ENCODE measurements at regions of chr4 and their contacts with region 1.

Region 1: DNA sequence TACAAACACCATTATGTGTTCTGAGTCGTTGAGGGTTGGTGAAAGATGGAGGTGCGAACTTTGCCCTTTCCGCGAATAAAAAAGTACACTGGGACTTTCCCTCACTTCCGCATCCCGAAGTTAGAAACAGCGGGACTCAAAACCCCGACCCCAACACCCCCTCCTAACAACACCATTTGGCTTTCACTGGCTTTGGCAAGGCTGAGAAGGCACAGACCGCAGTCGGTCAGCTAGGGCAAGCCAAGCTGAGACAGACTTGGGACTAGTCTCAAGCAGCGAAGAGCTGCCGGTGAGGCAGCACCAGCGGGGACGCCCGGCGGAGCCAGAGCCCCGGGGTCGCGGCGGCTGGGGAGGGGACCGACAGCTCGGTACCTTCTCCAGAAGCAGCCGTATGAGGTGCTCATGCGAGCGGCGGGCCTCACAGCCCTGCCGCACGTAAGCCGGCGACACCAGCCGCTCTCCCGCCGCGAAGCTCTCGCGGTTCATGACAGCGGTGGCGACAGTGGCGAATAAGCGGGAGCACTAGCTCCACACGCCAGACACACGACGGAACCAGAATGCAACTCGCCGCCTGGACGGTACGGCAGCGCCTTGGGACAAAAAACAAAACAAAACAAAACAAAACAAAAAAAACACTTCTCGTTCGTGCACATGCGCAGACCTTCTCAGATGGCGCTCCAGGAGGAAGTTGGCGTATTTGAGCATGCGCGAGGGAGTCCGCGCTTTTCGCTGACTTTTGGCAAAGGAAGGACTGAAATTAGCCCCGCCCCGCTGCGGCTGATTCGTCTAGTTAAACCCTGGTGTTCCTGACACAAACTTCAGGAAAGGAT is at the start of gene SEPSECS:
- DNase-seq: peak; percentile 95 to 96 (median 96)
- H3K4me3 ChIP-seq: peak within 1 kb of the TSS; percentile 62 to 68
- H3K4me3 Mint-ChIP-seq: peak within 1 kb of the TSS; percentile 90 to 97 (median 94)
- H3K27ac ChIP-seq: peak within 1 kb of the TSS; percentile 97
- H3K27ac Mint-ChIP-seq: peak within 1 kb of the TSS; percentile 94 to 99 (median 97)
- H3K4me1 ChIP-seq: peaks cover 38% of the 10 kb centered on the region
- H3K4me1 Mint-ChIP-seq: peaks cover 33 to 68% (median 43%) of the 10 kb centered on the region in 4 donors
- H3K27me3 ChIP-seq: no peaks in the 10 kb centered on the region
- H3K27me3 Mint-ChIP-seq: no peaks in the 10 kb centered on the region
- total RNA-seq, gene SEPSECS: 14.7 to 15.1 TPM

Region 2: DNA sequence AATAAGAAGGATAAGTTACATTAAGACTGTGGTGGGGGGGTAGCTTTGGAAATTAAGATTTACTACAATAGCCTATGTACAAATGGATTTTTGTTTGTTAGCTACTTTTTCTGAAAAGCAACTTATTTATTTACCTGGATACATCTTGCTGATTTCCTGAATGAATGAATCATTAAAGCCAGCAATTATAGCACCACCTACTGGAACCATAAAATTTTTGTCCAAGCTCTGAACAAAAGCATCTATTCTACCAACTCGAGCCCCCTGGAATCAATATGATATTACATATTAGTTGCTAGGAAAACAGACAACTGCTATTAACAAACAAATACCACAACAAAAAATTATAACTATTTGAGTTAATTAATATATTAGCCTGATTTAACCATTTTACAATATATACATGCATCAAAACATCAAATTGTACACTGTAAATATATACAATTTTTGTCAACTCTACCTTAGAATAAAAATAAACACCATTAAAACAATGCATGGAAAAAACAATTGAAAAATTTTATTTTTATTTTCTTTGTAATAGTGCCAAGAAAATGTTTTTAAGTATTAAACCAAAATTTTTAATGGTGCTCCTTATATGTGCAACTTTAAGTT is 15.1 kb before region 1 on chr4:
- CTCF ChIA-PET with region 1: interaction called, 13 read pairs
- POLR2A ChIA-PET with region 1: interaction called, 5 read pairs
- intact Hi-C with region 1: no loop called
- DNase-seq: peak in 1 of 5 donors; percentile 7
- H3K4me3 ChIP-seq: no peak overlapping the region
- H3K4me3 Mint-ChIP-seq: no peak overlapping the region
- H3K27ac ChIP-seq: no peak overlapping the region
- H3K27ac Mint-ChIP-seq: no peak overlapping the region
- H3K4me1 ChIP-seq: no peaks in the 10 kb centered on the region
- H3K4me1 Mint-ChIP-seq: peaks cover 0 to 1% (median 0%) of the 10 kb centered on the region in 4 donors
- H3K27me3 ChIP-seq: no peaks in the 10 kb centered on the region
- H3K27me3 Mint-ChIP-seq: no peaks in the 10 kb centered on the region

Region 3: DNA sequence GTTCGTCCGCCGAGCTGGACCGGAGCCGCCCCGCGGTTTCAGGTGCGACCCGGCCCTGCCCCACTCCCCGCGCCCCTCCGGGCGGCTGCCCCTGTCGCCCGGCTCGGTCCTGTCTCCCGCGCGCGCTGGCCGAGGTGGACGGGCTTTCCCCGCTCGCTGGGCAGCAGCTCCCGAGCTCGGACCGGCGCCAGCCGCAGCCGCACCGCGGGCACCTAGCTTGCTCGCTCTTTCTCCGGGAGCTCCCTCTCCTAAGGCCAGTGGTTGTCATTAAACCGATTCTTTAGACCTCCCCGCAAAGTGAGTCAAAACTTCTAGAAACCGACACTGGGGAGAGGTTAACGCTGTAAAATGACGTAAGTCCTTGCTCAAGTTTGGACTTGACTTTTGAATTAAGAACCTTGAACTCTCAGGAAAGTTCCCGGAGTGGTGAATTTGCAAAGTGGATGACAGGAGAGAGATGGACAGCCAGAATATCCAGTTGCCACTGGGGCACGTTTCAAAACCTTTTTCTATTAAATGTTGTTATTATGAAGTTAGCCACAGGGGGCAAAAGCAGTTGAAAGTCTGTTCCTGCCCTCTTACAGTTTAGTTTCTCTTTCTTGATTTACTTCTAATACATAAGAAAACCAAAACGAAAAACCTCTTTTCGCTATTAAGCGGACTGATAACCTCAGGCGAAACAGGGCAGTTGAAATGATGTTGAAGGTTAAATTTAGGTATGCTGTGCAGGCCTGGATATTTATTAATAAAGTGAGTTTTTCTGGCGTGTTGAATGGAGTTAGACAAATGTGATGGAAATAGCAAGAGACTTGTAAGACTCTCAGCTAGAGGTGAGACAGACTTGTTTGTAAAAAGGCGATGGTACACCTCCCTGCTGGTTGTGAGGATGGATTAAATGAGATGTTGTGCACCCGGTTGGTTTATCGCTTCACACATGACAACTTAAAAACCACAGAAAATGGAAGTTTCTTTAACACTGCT is 74.6 kb after region 1 on chr4:
- CTCF ChIA-PET with region 1: interaction called, 36 read pairs
- POLR2A ChIA-PET with region 1: interaction called, 70 read pairs
- intact Hi-C with region 1: loop called (anchors 1 kb)
- DNase-seq: peak; percentile 73 to 82 (median 77)
- H3K4me3 ChIP-seq: peak overlapping the region; percentile 55 to 87
- H3K4me3 Mint-ChIP-seq: peak overlapping the region; percentile 83 to 98 (median 94)
- H3K27ac ChIP-seq: peak overlapping the region; percentile 87
- H3K27ac Mint-ChIP-seq: peak overlapping the region; percentile 85 to 98 (median 96)
- H3K4me1 ChIP-seq: peaks cover 37% of the 10 kb centered on the region
- H3K4me1 Mint-ChIP-seq: peaks cover 24 to 76% (median 39%) of the 10 kb centered on the region in 4 donors
- H3K27me3 ChIP-seq: no peaks in the 10 kb centered on the region
- H3K27me3 Mint-ChIP-seq: no peaks in the 10 kb centered on the region

Region 4: GRCh38 chr4:25376754-25377571 is 216.9 kb after region 1 on chr4 and contains the start of gene ANAPC4:
- CTCF ChIA-PET with region 1: no interaction called
- POLR2A ChIA-PET with region 1: interaction called, 10 read pairs
- intact Hi-C with region 1: loop called (anchors 1 kb)
- DNase-seq: peak; percentile 92 to 97 (median 93)
- H3K4me3 ChIP-seq: peak within 1 kb of the TSS; percentile 57 to 95
- H3K4me3 Mint-ChIP-seq: peak within 1 kb of the TSS in 1 of 8 donors; percentile 80
- H3K27ac ChIP-seq: peak within 1 kb of the TSS; percentile 73
- H3K27ac Mint-ChIP-seq: peak within 1 kb of the TSS; percentile 65 to 92 (median 89)
- H3K4me1 ChIP-seq: peaks cover 24% of the 10 kb centered on the region
- H3K4me1 Mint-ChIP-seq: peaks cover 3 to 13% (median 10%) of the 10 kb centered on the region in 4 donors
- H3K27me3 ChIP-seq: no peaks in the 10 kb centered on the region
- H3K27me3 Mint-ChIP-seq: no peaks in the 10 kb centered on the region
- total RNA-seq, gene ANAPC4: 61.8 to 63.7 TPM

Region 5: GRCh38 chr4:25913851-25914669 is 754.0 kb after region 1 on chr4 and contains the start of gene SMIM20:
- CTCF ChIA-PET with region 1: no interaction called
- POLR2A ChIA-PET with region 1: interaction called, 3 read pairs
- intact Hi-C with region 1: loop called (anchors 2 kb)
- DNase-seq: peak; percentile 90 to 93 (median 93)
- H3K4me3 ChIP-seq: peak within 1 kb of the TSS; percentile 44 to 78
- H3K4me3 Mint-ChIP-seq: peak within 1 kb of the TSS; percentile 92 to 98 (median 96)
- H3K27ac ChIP-seq: peak within 1 kb of the TSS; percentile 82
- H3K27ac Mint-ChIP-seq: peak within 1 kb of the TSS; percentile 97 to 99 (median 98)
- H3K4me1 ChIP-seq: peaks cover 18% of the 10 kb centered on the region
- H3K4me1 Mint-ChIP-seq: peaks cover 12 to 30% (median 20%) of the 10 kb centered on the region in 4 donors
- H3K27me3 ChIP-seq: no peaks in the 10 kb centered on the region
- H3K27me3 Mint-ChIP-seq: no peaks in the 10 kb centered on the region
- total RNA-seq, gene SMIM20: 16.9 to 19.2 TPM

Region 6: GRCh38 chr4:26583865-26584652 is 1424.0 kb after region 1 on chr4 and contains the start of gene TBC1D19:
- CTCF ChIA-PET with region 1: no interaction called
- POLR2A ChIA-PET with region 1: no interaction called
- intact Hi-C with region 1: loop called (anchors 10 kb)
- DNase-seq: peak; percentile 87 to 90 (median 89)
- H3K4me3 ChIP-seq: peak within 1 kb of the TSS; percentile 44 to 75
- H3K4me3 Mint-ChIP-seq: peak within 1 kb of the TSS; percentile 91 to 99 (median 96)
- H3K27ac ChIP-seq: peak within 1 kb of the TSS; percentile 81
- H3K27ac Mint-ChIP-seq: peak within 1 kb of the TSS; percentile 89 to 99 (median 98)
- H3K4me1 ChIP-seq: peaks cover 17% of the 10 kb centered on the region
- H3K4me1 Mint-ChIP-seq: peaks cover 18 to 38% (median 26%) of the 10 kb centered on the region in 4 donors
- H3K27me3 ChIP-seq: no peaks in the 10 kb centered on the region
- H3K27me3 Mint-ChIP-seq: peaks cover 1 to 2% of the 10 kb centered on the region in 2 donors
- total RNA-seq, gene TBC1D19: 7.9 to 9.5 TPM